ENCODE measurements at regions of chr6 and their contacts with region 1.

Region 1: GRCh38 chr6:22432060-22432459 is 135.2 kb upstream of the PRL start:
- DNase-seq: no peak
- H3K4me3 ChIP-seq: no peak overlapping the region
- CTCF ChIP-seq: no peak

Region 2: DNA sequence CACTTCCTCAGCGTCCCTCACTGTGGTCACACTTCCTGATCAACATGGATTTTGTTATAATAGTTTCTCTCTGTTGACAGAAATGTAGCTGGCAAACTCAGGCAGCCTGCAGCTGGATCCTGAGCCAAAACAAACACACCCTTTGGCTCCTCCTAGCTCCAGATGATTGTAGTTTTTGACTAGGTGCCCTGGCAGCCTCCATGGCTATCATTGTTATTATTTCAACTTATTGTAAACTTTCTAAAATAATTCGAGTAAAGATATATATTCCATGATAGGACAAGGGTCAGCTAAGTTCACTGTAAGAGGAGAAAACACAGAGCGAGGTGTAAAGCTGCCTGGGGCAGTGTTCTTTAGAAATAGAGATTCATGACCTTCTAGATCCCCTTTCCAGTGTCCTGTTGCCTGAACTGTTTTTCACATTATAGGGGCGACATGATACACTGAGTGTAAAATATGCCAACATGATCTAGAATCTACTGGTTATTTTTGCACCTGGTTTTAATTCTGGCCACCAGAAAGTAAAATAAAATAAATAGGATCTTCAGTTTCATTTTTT is 39.2 kb after region 1 on chr6:
- in situ Hi-C with region 1: loop called (anchors 5 kb)
- DNase-seq: peak; percentile 52
- H3K4me3 ChIP-seq: no peak overlapping the region
- CTCF ChIP-seq: no peak

Measured in astrocyte of the cerebellum (primary cell).